ENCODE measurements at regions of chr11 and their contacts with region 1.

Region 1: DNA sequence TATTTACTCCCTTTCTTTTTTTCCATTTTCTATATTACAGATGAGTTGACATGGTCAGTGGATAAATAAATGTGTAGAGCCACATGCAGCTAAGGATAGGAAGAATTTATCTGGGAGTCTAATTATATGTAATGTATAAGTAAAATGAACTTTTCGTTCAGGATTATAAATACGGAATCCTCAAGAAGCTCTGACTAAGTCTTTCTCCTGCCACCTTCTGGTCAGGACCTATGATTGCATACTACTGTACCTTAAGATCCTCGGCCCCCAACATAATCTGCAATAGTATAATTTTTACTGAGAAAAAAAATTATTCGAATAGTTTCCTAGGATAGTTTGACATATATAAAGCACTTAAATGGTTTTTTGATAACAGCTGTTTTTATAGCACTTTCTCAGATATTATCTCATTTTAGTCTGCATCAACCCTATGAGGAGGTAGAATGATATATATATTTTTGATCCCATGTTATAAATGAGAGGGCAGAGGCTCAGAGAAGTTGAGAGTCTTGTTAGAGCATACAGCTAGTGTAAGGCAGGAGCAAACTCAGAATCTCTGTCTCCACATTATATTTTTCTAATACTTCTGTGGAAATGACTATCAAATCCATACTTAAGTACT is 36.1 kb downstream of the CCDC90B start:
- DNase-seq: peak; percentile 12
- ATAC-seq: peak; percentile 88
- H3K4me3 Mint-ChIP-seq: no peak overlapping the region
- H3K27ac Mint-ChIP-seq: no peak overlapping the region
- H3K4me1 Mint-ChIP-seq: no peaks in the 10 kb centered on the region
- H3K27me3 Mint-ChIP-seq: no peaks in the 10 kb centered on the region
- CTCF ChIP-seq: peak; percentile 83

Region 2: GRCh38 chr11:82906244-82906654 is 343.8 kb before region 1 on chr11:
- CTCF ChIA-PET with region 1: interaction called, 11 read pairs
- POLR2A ChIA-PET with region 1: no interaction called
- intact Hi-C with region 1: no loop called
- DNase-seq: no peak
- ATAC-seq: no peak
- H3K4me3 Mint-ChIP-seq: no peak overlapping the region
- H3K27ac Mint-ChIP-seq: no peak overlapping the region
- H3K4me1 Mint-ChIP-seq: peaks cover 52% of the 10 kb centered on the region
- H3K27me3 Mint-ChIP-seq: no peaks in the 10 kb centered on the region
- CTCF ChIP-seq: peak; percentile 72

Region 3: DNA sequence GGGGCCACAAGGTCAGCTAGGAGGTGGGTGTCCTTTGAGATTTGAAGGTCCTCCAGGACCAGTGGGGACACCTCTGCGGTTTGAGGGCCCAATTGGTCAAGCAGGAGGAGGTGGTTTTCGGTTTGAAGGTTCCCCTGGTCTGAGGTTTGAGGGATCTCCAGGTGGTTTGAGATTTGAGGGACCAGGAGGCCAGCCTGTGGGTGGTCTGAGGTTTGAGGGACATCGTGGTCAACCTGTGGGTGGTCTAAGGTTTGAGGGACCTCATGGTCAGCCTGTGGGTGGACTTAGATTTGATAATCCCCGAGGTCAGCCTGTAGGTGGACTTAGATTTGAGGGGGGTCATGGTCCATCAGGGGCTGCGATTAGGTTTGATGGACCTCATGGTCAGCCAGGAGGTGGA is 81.3 kb before region 1 on chr11:
- CTCF ChIA-PET with region 1: no interaction called
- POLR2A ChIA-PET with region 1: no interaction called
- intact Hi-C with region 1: no loop called
- DNase-seq: no peak
- ATAC-seq: no peak
- H3K4me3 Mint-ChIP-seq: no peak overlapping the region
- H3K27ac Mint-ChIP-seq: no peak overlapping the region
- H3K4me1 Mint-ChIP-seq: peaks cover 74% of the 10 kb centered on the region
- H3K27me3 Mint-ChIP-seq: no peaks in the 10 kb centered on the region
- CTCF ChIP-seq: no peak

Region 4: GRCh38 chr11:83235825-83236224 is 14.3 kb before region 1 on chr11:
- CTCF ChIA-PET with region 1: interaction called, 27 read pairs
- POLR2A ChIA-PET with region 1: no interaction called
- intact Hi-C with region 1: no loop called
- DNase-seq: no peak
- ATAC-seq: no peak
- H3K4me3 Mint-ChIP-seq: no peak overlapping the region
- H3K27ac Mint-ChIP-seq: no peak overlapping the region
- H3K4me1 Mint-ChIP-seq: no peaks in the 10 kb centered on the region
- H3K27me3 Mint-ChIP-seq: no peaks in the 10 kb centered on the region
- CTCF ChIP-seq: no peak

Region 5: DNA sequence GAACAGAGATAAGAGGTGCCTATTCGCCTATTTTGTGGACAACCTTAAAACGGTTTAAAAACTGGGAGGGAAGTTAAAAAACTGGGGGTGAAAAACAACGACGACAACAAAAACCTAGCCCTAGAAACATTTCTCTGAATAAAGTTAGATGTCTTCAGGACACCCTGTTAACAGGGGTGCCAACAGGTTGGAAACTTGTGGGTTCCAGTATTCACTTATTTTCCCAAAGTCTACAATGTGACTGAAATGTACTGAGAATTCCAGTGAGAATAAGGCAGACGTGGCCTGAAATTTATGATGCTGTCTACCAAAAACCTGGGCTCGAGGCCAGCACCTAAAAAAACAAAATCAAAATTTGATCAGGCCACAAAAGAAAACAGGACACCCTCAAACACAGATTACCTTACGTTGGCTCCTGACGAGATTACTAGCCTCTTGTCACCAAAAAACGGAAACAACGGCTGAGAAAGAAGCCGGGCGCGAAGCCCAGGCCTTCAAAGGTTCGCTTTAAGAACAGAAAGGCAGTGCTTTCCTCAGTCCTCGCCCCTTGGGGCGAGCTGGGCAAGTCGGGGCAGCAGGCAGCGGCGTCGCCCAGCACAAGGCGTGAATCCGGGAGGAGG is 35.2 kb after region 1 on chr11:
- CTCF ChIA-PET with region 1: interaction called, 14 read pairs
- POLR2A ChIA-PET with region 1: no interaction called
- intact Hi-C with region 1: no loop called
- DNase-seq: no peak
- ATAC-seq: peak; percentile 44
- H3K4me3 Mint-ChIP-seq: peak overlapping the region; percentile 91
- H3K27ac Mint-ChIP-seq: peak overlapping the region; percentile 99
- H3K4me1 Mint-ChIP-seq: peaks cover 30% of the 10 kb centered on the region
- H3K27me3 Mint-ChIP-seq: no peaks in the 10 kb centered on the region
- CTCF ChIP-seq: no peak

Region 6: GRCh38 chr11:83392556-83392955 is 142.5 kb after region 1 on chr11:
- CTCF ChIA-PET with region 1: no interaction called
- POLR2A ChIA-PET with region 1: no interaction called
- intact Hi-C with region 1: no loop called
- DNase-seq: no peak
- ATAC-seq: no peak
- H3K4me3 Mint-ChIP-seq: no peak overlapping the region
- H3K27ac Mint-ChIP-seq: no peak overlapping the region
- H3K4me1 Mint-ChIP-seq: no peaks in the 10 kb centered on the region
- H3K27me3 Mint-ChIP-seq: no peaks in the 10 kb centered on the region
- CTCF ChIP-seq: no peak

Measured in activated CD8-positive, alpha-beta T cell treated with anti-CD3 and anti-CD28 coated beads for 36 hours (primary cell).